Sigmoid colon (tissue), 7 donors: ENCODE measurements at regions of chr4 and their contacts with region 1.

Region 1: DNA sequence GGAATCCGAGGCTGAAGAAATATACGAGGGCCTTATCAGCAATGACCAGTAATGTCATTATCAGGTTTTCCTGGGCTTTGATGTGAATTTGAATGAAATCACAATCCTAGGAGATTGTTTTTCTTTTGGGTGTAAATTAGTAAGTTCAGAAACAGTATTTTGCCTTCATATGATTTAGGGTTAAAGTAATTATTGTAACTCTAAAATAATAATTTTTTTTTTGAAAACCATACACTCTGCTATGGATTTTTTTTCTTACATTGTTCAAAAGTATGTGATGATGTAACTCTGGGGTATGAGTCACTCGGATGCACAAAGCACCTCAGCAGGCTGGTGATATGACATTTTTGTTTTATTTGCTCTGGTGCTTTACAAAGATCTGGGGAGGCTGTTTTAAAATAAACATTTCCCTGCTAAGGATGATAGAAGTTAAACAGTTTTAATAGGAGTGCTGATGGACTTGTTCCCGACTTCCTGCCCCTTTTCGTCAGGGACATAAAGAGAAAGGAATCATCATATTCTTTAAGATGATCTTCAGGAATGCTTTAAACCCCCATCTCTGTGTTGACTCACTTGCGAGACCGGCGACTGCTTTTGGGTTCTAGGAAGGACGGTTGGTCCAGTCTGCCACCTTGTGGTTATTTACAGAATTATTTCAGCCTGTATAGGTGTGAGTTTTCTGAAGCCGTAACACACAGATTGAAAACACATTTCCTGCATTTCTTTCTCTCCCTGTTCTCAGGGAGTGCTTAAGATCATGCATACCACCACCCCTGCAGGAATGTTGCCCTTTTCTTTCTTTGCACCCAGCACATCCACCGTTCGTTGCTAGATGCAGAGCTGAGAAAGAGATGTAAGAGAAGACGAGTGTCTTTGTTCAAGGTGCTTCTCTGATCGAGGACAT is 72.5 kb downstream of the RAPGEF2 start:
- DNase-seq: peak; percentile 80
- H3K4me3 ChIP-seq: peak overlapping the region in 2 of 4 donors; percentile 19 to 20
- H3K27ac ChIP-seq: peak overlapping the region; percentile 51 to 80 (median 59)
- H3K4me1 ChIP-seq: peaks cover 0 to 81% (median 65%) of the 10 kb centered on the region in 4 donors
- H3K27me3 ChIP-seq: no peaks in the 10 kb centered on the region
- CTCF ChIP-seq: peak; percentile 78 to 86 (median 85)
- EP300 ChIP-seq: peak in 1 of 4 donors; percentile 34
- POLR2A ChIP-seq: no peak

Region 2: GRCh38 chr4:158722917-158723793 is 452.2 kb before region 1 on chr4 and contains the start of gene PPID:
- intact Hi-C with region 1: loop called (anchors 2 kb)
- DNase-seq: peak; percentile 88
- H3K4me3 ChIP-seq: peak within 1 kb of the TSS; percentile 61 to 85 (median 72)
- H3K27ac ChIP-seq: peak within 1 kb of the TSS; percentile 82 to 92 (median 89)
- H3K4me1 ChIP-seq: peaks cover 0 to 14% (median 11%) of the 10 kb centered on the region in 4 donors
- H3K27me3 ChIP-seq: no peaks in the 10 kb centered on the region
- CTCF ChIP-seq: no peak
- EP300 ChIP-seq: peak in 1 of 4 donors; percentile 1
- POLR2A ChIP-seq: peak; percentile 68 to 70
- total RNA-seq, gene PPID: 17.8 to 54.8 (median 28.6) TPM

Region 3: DNA sequence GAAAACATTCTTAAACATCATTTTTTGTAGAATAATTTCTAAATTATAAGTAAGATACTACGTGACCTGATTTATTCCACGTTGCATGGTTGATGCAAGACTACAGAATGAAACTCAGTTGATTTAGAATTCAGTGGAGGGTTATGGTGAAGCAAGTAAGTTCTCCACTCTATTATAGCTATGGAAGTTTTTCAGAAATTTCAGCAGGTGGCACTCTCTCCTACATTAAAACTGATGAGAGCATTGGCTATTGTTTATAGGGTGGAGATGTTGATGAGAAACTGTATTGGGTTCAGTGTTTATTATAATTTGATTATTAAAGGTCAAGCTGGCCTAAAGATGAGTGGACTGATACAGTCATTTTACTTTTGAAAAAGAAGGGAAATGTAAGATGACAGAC is 318.5 kb before region 1 on chr4:
- intact Hi-C with region 1: loop called (anchors 1 kb)
- DNase-seq: no peak
- H3K4me3 ChIP-seq: no peak overlapping the region
- H3K27ac ChIP-seq: no peak overlapping the region
- H3K4me1 ChIP-seq: peaks cover 0 to 9% (median 6%) of the 10 kb centered on the region in 4 donors
- H3K27me3 ChIP-seq: no peaks in the 10 kb centered on the region
- CTCF ChIP-seq: peak in 3 of 4 experiments; percentile 49 to 54 (median 54)
- EP300 ChIP-seq: no peak
- POLR2A ChIP-seq: no peak

Region 4: DNA sequence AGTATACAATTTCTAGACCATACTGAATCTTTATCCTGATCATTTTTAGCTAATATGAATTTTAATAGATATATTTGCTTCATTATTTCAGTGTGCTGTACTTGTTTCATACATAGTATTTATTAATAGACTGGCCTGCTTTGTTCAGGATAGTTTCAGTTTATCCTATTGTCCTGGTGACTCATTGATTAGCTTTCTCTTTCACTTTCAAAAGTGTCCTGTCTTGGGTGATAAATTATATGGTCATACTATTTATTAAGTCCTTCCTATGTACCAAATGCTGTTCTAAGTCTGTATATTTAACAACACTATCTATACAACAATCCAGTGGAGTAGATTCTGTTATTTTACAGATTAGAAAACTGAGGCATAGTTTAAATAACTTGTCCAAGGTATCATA is 226.2 kb before region 1 on chr4:
- intact Hi-C with region 1: no loop called
- DNase-seq: no peak
- H3K4me3 ChIP-seq: no peak overlapping the region
- H3K27ac ChIP-seq: no peak overlapping the region
- H3K4me1 ChIP-seq: no peaks in the 10 kb centered on the region
- H3K27me3 ChIP-seq: no peaks in the 10 kb centered on the region
- CTCF ChIP-seq: no peak
- EP300 ChIP-seq: no peak
- POLR2A ChIP-seq: no peak

Region 5: DNA sequence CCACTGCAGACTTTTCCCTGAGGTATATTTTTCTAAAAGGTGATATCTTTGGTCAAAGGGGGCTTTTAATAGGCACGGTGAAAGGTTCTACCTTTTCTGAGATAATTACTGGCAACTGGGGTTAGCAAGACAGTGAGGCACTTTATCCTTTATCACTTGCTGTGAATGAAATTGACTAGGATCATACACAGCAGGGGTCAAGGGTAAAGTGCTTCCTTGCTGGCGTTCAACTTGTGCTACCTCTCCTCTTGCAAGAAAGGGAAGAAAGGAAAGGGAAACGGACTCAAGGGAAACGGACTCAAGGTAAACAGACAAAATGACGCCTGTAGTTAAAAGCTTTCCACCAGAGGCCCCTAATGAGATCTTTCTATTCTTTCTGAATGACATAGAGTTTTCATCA is 151.1 kb before region 1 on chr4:
- intact Hi-C with region 1: loop called (anchors 5 kb)
- DNase-seq: no peak
- H3K4me3 ChIP-seq: no peak overlapping the region
- H3K27ac ChIP-seq: peak overlapping the region in 3 of 4 donors; percentile 57 to 78 (median 71)
- H3K4me1 ChIP-seq: peaks cover 0 to 39% (median 19%) of the 10 kb centered on the region in 4 donors
- H3K27me3 ChIP-seq: no peaks in the 10 kb centered on the region
- CTCF ChIP-seq: no peak
- EP300 ChIP-seq: no peak
- POLR2A ChIP-seq: no peak

Region 6: DNA sequence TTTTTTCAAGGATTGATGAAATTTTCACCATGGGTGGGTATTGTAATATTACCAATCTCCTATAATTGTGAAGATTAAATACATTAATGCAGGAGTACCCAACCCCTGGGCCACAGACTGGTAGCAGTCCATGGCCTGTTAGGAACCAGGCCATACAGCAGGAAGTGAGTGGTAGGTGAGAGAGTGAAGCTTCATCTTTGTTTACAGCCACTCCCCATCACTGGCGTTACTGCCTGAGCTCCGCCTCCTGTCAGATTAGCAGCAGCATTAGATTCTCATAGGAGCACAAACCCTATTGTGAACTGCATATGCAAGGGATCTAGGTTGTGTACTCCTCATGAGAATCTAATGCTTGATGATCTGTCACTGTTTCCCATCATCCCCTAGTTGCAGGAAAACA is 57.4 kb before region 1 on chr4:
- intact Hi-C with region 1: no loop called
- DNase-seq: no peak
- H3K4me3 ChIP-seq: no peak overlapping the region
- H3K27ac ChIP-seq: no peak overlapping the region
- H3K4me1 ChIP-seq: peaks cover 0 to 27% (median 1%) of the 10 kb centered on the region in 4 donors
- H3K27me3 ChIP-seq: no peaks in the 10 kb centered on the region
- CTCF ChIP-seq: no peak
- EP300 ChIP-seq: no peak
- POLR2A ChIP-seq: no peak

Region 7: DNA sequence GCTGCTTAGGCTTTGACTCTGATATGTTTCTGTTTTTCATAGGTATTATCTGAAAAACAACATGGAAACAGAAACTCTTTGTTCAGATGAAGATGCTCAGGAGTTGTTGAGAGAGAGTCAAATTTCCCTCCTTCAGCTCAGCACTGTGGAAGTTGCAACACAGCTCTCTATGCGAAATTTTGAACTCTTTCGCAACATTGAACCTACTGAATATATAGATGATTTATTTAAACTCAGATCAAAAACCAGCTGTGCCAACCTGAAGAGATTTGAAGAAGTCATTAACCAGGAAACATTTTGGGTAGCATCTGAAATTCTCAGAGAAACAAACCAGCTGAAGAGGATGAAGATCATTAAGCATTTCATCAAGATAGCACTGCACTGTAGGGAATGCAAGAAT is 166.2 kb after region 1 on chr4:
- intact Hi-C with region 1: no loop called
- DNase-seq: no peak
- H3K4me3 ChIP-seq: no peak overlapping the region
- H3K27ac ChIP-seq: no peak overlapping the region
- H3K4me1 ChIP-seq: no peaks in the 10 kb centered on the region
- H3K27me3 ChIP-seq: no peaks in the 10 kb centered on the region
- CTCF ChIP-seq: no peak
- EP300 ChIP-seq: no peak
- POLR2A ChIP-seq: no peak

Region 8: GRCh38 chr4:159593651-159594050 is 418.3 kb after region 1 on chr4:
- intact Hi-C with region 1: no loop called
- DNase-seq: no peak
- H3K4me3 ChIP-seq: no peak overlapping the region
- H3K27ac ChIP-seq: no peak overlapping the region
- H3K4me1 ChIP-seq: no peaks in the 10 kb centered on the region
- H3K27me3 ChIP-seq: no peaks in the 10 kb centered on the region
- CTCF ChIP-seq: no peak
- EP300 ChIP-seq: no peak
- POLR2A ChIP-seq: no peak